ENCODE measurements at regions of chr13 and their contacts with region 1.

Region 1: GRCh38 chr13:41054212-41054877 is 7.0 kb upstream of the WBP4 start:
- DNase-seq: no peak
- H3K4me3 ChIP-seq: no peak overlapping the region
- H3K27ac ChIP-seq: peak overlapping the region in 1 of 2 donors; percentile 31
- H3K4me1 ChIP-seq: peaks cover 11% of the 10 kb centered on the region
- H3K27me3 ChIP-seq: no peaks in the 10 kb centered on the region
- CTCF ChIP-seq: peak in 2 of 3 donors; percentile 28 to 39
- EP300 ChIP-seq: no peak
- POLR2A ChIP-seq: no peak

Region 2: DNA sequence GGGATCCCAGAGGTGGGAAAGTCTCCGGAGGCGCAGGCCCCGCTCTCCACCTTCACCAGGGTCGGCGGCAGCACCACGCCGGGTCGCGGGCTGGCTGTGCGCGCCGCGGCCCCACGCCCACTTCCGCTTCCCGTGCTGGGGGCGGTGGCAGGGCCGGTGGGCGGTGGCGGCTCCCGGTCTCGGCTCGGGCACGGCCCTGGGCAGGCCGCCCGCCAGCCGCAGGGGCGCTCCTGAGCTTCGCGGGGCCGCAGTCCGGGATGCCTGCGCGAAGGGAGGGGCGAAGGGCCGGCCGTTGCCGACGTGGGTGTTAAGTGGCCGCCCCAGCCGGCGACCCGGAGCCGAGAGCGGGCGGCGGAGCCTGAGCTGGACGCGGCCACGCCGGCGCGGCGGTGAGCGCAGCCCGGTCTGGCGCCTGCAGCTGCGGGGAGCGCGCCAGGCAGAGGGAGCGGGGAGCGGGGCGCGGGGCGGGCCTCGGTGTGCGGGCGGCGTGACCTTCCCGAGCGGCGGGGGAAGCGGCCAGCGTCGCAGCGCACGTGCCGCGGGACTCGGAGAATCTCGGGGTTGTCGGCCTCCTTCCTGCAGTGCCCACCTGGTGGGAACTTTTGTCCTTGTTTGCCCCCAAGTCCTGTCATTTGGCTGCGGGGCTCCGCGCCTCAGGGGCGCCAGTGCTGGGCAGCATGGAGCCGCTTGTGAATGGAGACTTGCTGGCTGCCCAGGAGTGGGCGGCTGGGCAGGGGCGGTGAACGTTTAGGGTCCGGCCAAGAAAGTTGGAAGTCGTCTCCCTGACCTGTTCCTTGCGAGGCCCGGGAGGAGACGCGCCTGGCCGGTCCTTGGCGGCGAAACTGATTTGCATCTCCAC is 264.8 kb before region 1 on chr13 and contains the start of gene SLC25A15:
- intact Hi-C with region 1: loop called in 2 of 4 experiments (anchors 5 to 10 kb)
- DNase-seq: peak; percentile 65 to 84 (median 73)
- H3K4me3 ChIP-seq: peak within 1 kb of the TSS; percentile 56
- H3K27ac ChIP-seq: peak within 1 kb of the TSS; percentile 65 to 79
- H3K4me1 ChIP-seq: no peaks in the 10 kb centered on the region
- H3K27me3 ChIP-seq: no peaks in the 10 kb centered on the region
- CTCF ChIP-seq: peak in 2 of 3 donors; percentile 22 to 44
- EP300 ChIP-seq: no peak
- POLR2A ChIP-seq: no peak
- total RNA-seq, gene SLC25A15: 2.3 to 8.4 (median 4.6) TPM

Region 3: GRCh38 chr13:40922437-40923040 is 131.8 kb before region 1 on chr13:
- intact Hi-C with region 1: loop called in 1 of 4 experiments (anchors 10 kb)
- DNase-seq: peak; percentile 20 to 50 (median 41)
- H3K4me3 ChIP-seq: no peak overlapping the region
- H3K27ac ChIP-seq: no peak overlapping the region
- H3K4me1 ChIP-seq: no peaks in the 10 kb centered on the region
- H3K27me3 ChIP-seq: no peaks in the 10 kb centered on the region
- CTCF ChIP-seq: no peak
- EP300 ChIP-seq: no peak
- POLR2A ChIP-seq: no peak

Region 4: GRCh38 chr13:40974460-40975407 is 79.6 kb before region 1 on chr13:
- intact Hi-C with region 1: loop called in 1 of 4 experiments (anchors 10 kb)
- DNase-seq: no peak
- H3K4me3 ChIP-seq: no peak overlapping the region
- H3K27ac ChIP-seq: no peak overlapping the region
- H3K4me1 ChIP-seq: peaks cover 7% of the 10 kb centered on the region
- H3K27me3 ChIP-seq: no peaks in the 10 kb centered on the region
- CTCF ChIP-seq: peak in 1 of 3 donors; percentile 32
- EP300 ChIP-seq: no peak
- POLR2A ChIP-seq: no peak

Region 5: GRCh38 chr13:40992678-40993518 is 61.4 kb before region 1 on chr13:
- intact Hi-C with region 1: loop called in 1 of 4 experiments (anchors 10 kb)
- DNase-seq: no peak
- H3K4me3 ChIP-seq: no peak overlapping the region
- H3K27ac ChIP-seq: no peak overlapping the region
- H3K4me1 ChIP-seq: peaks cover 6% of the 10 kb centered on the region
- H3K27me3 ChIP-seq: no peaks in the 10 kb centered on the region
- CTCF ChIP-seq: no peak
- EP300 ChIP-seq: no peak
- POLR2A ChIP-seq: no peak

Measured in ovary (tissue), 10 donors.